HCT116 (cell line): ENCODE measurements at regions of chr15 and their contacts with region 1.

Region 1: GRCh38 chr15:39686000-39686613 is 96.5 kb downstream of the FSIP1 start:
- DNase-seq: peak; percentile 37
- ATAC-seq: peak; percentile 72
- H3K4me3 ChIP-seq: no peak overlapping the region
- H3K27ac ChIP-seq: no peak overlapping the region
- H3K4me1 ChIP-seq: no peaks in the 10 kb centered on the region
- H3K27me3 ChIP-seq: no peaks in the 10 kb centered on the region
- CTCF ChIP-seq: peak; percentile 55 to 83 (median 76); a peak in 5 of 6 replicates
- POLR2A ChIP-seq: no peak
- RAD21 ChIP-seq: peak; percentile 74

Region 2: GRCh38 chr15:39874890-39875549 is 188.9 kb after region 1 on chr15:
- CTCF ChIA-PET with region 1: interaction called, 5 read pairs
- POLR2A ChIA-PET with region 1: no interaction called
- RAD21 ChIA-PET with region 1: no interaction called
- intact Hi-C with region 1: loop called (anchors 1 kb)
- DNase-seq: peak; percentile 24
- ATAC-seq: peak; percentile 81
- H3K4me3 ChIP-seq: no peak overlapping the region
- H3K27ac ChIP-seq: no peak overlapping the region
- H3K4me1 ChIP-seq: no peaks in the 10 kb centered on the region
- H3K27me3 ChIP-seq: no peaks in the 10 kb centered on the region
- CTCF ChIP-seq: peak; percentile 55 to 77 (median 72); a peak in 5 of 6 replicates
- POLR2A ChIP-seq: no peak
- RAD21 ChIP-seq: peak; percentile 64

Region 3: DNA sequence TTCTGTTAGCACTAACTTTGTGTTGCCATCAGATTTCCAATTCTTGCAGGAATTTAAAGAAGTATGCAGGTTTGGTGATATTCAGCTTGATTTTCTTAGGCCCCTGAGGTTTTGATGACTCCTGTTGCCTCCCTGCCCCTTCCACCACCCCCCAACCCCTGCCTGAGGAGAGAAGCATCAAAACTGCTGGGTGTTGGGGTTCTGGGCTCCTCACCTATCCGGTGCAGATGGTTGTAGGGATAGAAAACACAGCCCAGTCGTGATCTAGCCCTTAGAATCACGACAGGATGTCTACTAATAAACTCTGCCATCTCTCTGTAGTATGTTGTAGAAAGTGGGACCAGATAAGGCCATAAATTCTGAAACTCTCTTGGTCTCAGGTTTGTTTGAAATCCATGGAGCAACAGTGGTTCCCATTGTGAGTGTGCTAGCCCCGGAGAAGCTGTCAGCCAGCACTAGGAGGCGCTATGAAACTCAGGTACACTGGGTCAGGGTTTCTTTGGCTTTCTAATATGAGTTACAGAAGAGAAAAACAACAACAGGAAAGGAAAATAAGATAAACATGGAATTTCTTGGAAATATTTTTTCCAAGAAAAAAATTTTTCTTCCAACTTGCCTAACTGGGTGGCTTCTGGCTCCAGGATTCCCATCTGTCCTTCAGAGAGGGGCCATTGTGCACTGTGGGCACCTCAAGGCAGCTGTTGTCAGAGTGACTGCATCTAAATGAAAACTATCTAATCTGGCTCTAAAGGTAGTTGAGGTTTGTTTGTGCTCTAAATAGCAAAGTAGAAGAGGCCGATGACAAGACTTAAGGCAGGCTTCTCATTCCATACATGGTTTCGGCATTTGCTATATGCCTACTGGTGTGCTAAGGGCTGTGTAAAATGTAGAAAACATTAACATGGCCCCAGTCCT is 344.1 kb after region 1 on chr15:
- CTCF ChIA-PET with region 1: no interaction called
- POLR2A ChIA-PET with region 1: no interaction called
- RAD21 ChIA-PET with region 1: interaction called in 1 of 2 experiments, 3 read pairs
- intact Hi-C with region 1: loop called (anchors 10 kb)
- DNase-seq: no peak
- ATAC-seq: peak; percentile 90
- H3K4me3 ChIP-seq: no peak overlapping the region
- H3K27ac ChIP-seq: no peak overlapping the region
- H3K4me1 ChIP-seq: no peaks in the 10 kb centered on the region
- H3K27me3 ChIP-seq: no peaks in the 10 kb centered on the region
- CTCF ChIP-seq: peak; percentile 36 to 82 (median 70); a peak in 5 of 6 replicates
- POLR2A ChIP-seq: no peak
- RAD21 ChIP-seq: peak; percentile 36

Region 4: DNA sequence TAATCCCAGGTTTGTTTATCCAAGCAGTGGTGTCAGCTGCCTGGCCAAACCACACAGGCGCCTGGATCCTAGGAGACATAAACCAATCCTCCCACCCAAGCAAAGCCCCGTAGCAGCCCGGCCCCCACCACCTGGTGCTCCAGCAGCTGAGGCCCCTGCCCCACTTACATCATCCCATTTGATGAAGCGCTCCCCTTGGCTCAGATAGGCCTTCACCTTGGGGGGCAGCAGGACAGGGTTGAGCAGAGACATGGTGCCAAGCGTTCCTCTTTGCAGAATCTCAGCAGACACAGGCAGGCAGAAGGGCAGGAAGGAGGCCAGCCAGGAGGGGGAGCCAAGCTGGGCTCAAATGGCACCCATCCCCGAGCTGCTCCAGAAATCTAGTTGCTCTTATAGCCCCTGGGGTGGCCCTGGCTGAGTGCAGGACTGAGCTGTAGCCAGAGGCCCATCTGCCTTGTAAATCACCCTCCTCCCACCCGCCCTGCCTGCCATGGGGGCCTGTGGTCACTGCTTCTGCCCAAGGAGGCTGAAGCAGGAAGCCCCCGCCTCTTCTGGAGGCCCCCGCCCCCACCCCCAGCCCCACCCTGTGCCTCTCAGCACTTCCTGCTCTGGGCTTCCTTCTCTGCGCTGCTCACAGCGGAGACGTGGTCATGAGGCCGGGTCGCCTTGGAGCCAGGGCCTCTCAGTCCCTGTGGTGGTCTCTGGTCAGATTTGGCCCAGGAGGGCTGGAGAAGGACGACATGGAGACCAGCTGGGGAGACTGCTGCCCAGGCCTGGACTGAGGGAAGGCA is 621.5 kb after region 1 on chr15 and contains the start of gene PLCB2:
- CTCF ChIA-PET with region 1: no interaction called
- POLR2A ChIA-PET with region 1: no interaction called
- RAD21 ChIA-PET with region 1: no interaction called
- intact Hi-C with region 1: loop called (anchors 10 kb)
- DNase-seq: no peak
- ATAC-seq: peak; percentile 52
- H3K4me3 ChIP-seq: no peak within 1 kb of the TSS
- H3K27ac ChIP-seq: no peak within 1 kb of the TSS
- H3K4me1 ChIP-seq: peaks cover 2 to 14% of the 10 kb centered on the region in 2 experiments; a peak in 1 of 4 replicates
- H3K27me3 ChIP-seq: 0 out of 2 replicates have a peak, but pooled peaks cover 6% of the 10 kb centered on the region
- CTCF ChIP-seq: peak in 2 of 3 experiments; percentile 30 to 44; a peak in 3 of 6 replicates
- POLR2A ChIP-seq: no peak
- RAD21 ChIP-seq: no peak
- total RNA-seq, gene PLCB2: 2.8 TPM